Activated naive CD4-positive, alpha-beta T cell treated with anti-CD3 and anti-CD28 coated beads, Interleukin-2, amount 10 ng/mL, durations not matched to agents 7 days and 5 days (primary cell): ENCODE measurements at regions of chr9 and their contacts with region 1.

Region 1: DNA sequence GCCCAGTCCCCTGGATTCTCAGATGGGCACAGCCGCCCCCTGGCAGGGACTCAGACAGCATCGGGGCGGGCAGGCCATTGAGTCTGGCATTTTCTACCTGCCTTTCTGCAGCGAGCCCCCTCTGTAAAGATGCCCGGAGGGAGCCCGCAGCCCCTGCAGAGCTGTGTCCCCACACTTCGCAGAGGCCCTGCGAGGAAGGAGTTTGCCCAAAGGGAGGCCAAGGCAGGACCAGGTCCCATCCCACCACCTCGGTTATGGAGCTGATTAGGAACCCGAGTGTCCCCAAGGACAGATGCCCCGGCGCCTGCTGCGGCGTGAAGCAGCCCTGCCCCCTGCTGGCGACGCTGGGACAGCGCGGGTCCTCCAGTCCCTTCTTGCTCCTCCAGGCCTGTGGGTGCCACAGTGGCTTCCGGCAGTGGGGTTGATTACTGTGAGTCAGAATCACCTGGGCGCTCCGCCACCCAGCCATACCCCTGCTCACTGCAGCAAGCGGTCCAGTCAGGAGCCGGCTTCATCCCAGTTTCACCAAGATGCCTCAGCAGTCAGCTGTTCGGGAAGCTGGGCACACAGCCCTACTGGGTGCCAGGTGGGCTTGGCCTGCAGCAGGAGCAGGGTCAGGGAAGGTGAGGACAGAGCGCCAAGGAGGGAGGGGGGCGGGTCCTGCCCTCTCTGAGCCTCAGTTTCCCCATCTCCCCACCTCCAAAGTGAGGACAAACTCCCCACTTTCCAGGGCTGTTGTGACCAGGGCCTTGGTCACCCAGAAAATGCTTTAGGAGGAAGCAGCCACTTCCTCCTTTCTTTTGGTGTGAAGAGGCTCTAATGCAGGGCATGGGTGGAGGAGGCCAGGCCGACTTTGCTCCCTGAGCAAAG is 117.1 kb downstream of the RXRA start:
- DNase-seq: peak; percentile 92
- H3K4me3 Mint-ChIP-seq: no peak overlapping the region
- H3K27ac Mint-ChIP-seq: peak overlapping the region; percentile 55
- H3K4me1 Mint-ChIP-seq: peaks cover 20% of the 10 kb centered on the region
- H3K27me3 Mint-ChIP-seq: peaks cover 61% of the 10 kb centered on the region

Region 2: DNA sequence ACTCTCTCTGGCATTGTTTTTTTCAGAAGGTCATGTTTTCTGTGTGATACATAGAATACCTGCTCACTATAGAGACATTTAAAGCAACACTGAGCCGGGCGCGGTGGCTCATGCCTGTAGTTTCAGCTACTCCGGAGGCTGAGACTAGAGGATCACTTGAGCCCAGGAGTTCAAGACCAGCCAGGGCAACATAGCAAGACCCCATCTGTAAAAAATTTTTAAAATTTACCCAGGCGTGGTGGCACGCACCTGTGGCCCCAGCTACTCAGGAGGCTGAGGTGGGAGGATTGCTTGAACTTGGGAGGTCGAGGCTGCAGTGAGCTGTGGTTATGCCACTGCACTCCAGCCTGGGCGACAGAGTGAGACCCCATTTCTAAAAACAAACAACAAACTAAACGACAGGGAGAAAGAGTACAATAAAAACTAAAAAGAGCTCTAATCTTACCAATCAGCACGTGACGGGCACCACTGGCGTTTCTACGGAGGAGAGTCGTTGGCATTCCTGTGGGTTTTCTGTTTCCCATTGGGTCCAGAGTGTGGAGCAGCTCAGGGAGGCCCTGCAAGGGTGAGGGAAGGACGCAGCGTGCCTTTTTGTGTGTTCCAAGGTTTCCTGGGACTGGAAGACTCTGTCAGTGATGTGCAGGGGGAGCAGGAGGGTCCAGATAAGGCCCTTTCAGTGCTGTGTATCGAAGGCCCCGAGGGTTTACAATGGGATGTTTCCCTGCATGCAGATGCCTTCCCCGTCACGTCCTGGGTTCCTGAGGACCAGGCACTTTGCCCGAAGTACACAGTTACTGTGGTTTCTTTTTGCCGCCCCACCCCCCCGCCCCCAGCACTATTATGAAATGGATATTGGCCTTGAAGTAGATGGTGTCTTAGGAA is 271.8 kb before region 1 on chr9:
- CTCF ChIA-PET with region 1: interaction called, 36 read pairs
- DNase-seq: no peak
- H3K4me3 Mint-ChIP-seq: no peak overlapping the region
- H3K27ac Mint-ChIP-seq: no peak overlapping the region
- H3K4me1 Mint-ChIP-seq: peaks cover under 1% of the 10 kb centered on the region
- H3K27me3 Mint-ChIP-seq: peaks cover 9% of the 10 kb centered on the region

Region 3: GRCh38 chr9:134364391-134365114 is 78.8 kb before region 1 on chr9:
- CTCF ChIA-PET with region 1: interaction called, 13 read pairs
- DNase-seq: no peak
- H3K4me3 Mint-ChIP-seq: no peak overlapping the region
- H3K27ac Mint-ChIP-seq: no peak overlapping the region
- H3K4me1 Mint-ChIP-seq: no peaks in the 10 kb centered on the region
- H3K27me3 Mint-ChIP-seq: peaks cover 3% of the 10 kb centered on the region

Region 4: DNA sequence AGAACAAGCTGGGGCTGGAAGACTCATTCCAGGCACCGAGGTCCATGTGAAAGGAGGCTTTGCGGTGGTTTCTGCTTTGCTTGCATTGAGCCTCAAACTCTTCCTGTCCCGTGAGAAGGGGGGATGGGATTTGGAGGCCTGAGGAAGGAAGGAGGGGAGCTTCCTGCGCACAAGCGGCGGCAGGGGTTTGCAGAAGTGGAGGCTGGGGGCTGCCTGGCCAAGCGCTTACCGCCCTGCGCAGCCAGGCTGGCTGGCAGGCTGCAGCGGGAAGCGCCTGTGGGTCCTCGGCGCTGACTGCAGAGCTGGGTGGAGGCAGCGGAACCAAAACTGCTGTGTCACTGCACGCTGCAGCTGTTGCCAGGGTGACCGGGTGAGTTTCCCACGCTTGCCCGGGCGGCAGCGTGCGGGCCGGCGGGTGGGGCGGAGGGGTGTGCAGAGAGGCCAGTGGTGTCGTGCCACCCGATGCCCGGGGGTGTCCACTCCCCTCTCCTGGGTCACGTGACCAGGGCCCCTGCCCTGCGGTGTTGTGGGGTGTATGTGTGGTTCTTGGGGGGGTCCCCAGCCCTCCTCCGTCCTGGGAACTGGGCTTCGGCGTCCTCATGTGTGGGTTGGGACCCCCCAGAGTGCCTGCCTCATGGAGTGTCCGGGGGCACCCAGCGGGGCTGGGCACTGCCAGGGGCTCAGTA is 36.1 kb before region 1 on chr9:
- CTCF ChIA-PET with region 1: no interaction called
- DNase-seq: peak; percentile 90
- H3K4me3 Mint-ChIP-seq: peak overlapping the region; percentile 58
- H3K27ac Mint-ChIP-seq: peak overlapping the region; percentile 82
- H3K4me1 Mint-ChIP-seq: peaks cover 41% of the 10 kb centered on the region
- H3K27me3 Mint-ChIP-seq: peaks cover 72% of the 10 kb centered on the region

Region 5: DNA sequence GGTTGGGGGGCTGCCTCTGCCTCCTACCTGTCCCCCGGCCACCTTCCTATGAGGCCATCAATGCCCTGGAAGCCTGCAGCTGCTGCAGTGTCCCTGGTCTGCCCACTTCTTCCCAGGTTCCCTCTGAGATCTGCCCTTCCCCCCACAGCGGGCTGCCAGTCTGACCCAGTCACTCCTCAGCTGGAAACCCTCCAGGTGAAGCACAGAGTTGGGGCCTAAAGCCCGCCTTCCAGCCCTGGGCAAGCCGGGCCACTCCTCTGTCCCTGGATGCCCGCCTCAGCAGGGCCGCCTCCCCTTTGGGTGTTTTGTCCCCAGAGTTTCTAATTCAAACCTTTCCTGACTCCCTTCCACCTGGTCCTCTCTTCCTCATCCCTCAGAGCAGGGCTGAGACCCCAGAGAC is 19.9 kb after region 1 on chr9:
- CTCF ChIA-PET with region 1: no interaction called
- DNase-seq: no peak
- H3K4me3 Mint-ChIP-seq: no peak overlapping the region
- H3K27ac Mint-ChIP-seq: no peak overlapping the region
- H3K4me1 Mint-ChIP-seq: no peaks in the 10 kb centered on the region
- H3K27me3 Mint-ChIP-seq: peaks cover 17% of the 10 kb centered on the region

Region 6: GRCh38 chr9:134536101-134536900 is 92.9 kb after region 1 on chr9:
- CTCF ChIA-PET with region 1: no interaction called
- DNase-seq: no peak
- H3K4me3 Mint-ChIP-seq: no peak overlapping the region
- H3K27ac Mint-ChIP-seq: no peak overlapping the region
- H3K4me1 Mint-ChIP-seq: no peaks in the 10 kb centered on the region
- H3K27me3 Mint-ChIP-seq: no peaks in the 10 kb centered on the region